Activated naive CD4-positive, alpha-beta T cell treated with anti-CD3 and anti-CD28 coated beads, Interleukin-2, amount 10 ng/mL, durations not matched to agents 7 days and 5 days (primary cell): ENCODE measurements at regions of chr7 and their contacts with region 1.

Region 1: DNA sequence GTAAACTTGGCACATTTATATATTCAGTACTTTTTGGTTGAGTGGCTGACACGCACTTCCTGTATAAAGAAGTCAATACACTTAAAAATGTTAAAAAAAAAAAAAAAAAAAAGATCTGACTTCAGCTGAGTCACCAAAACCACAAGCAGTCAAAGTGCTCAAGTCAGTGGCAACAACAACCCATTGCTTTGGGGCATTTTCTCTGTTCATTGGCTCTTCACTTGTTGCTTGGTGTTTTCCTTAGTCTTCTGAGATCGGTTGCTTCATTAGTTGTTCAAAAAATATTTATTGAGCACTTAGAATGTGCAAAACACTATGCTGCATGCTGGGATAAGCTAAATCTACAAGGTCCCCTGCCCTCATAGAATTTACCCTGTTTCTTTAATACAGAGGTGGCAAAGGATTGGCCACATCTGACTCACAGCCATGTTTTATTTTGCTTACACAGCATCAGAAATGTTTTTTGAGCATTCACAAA is 63.7 kb downstream of the ZNRF2 start:
- DNase-seq: peak; percentile 58
- H3K4me3 Mint-ChIP-seq: peak overlapping the region; percentile 10
- H3K27ac Mint-ChIP-seq: peak overlapping the region; percentile 94
- H3K4me1 Mint-ChIP-seq: peaks cover 55% of the 10 kb centered on the region
- H3K27me3 Mint-ChIP-seq: no peaks in the 10 kb centered on the region

Region 2: GRCh38 chr7:30263090-30263710 is 84.9 kb before region 1 on chr7:
- CTCF ChIA-PET with region 1: no interaction called
- DNase-seq: no peak
- H3K4me3 Mint-ChIP-seq: no peak overlapping the region
- H3K27ac Mint-ChIP-seq: no peak overlapping the region
- H3K4me1 Mint-ChIP-seq: no peaks in the 10 kb centered on the region
- H3K27me3 Mint-ChIP-seq: peaks cover 8% of the 10 kb centered on the region

Region 3: GRCh38 chr7:30276203-30276900 is 71.8 kb before region 1 on chr7:
- CTCF ChIA-PET with region 1: interaction called, 71 read pairs
- DNase-seq: peak; percentile 65
- H3K4me3 Mint-ChIP-seq: no peak overlapping the region
- H3K27ac Mint-ChIP-seq: no peak overlapping the region
- H3K4me1 Mint-ChIP-seq: peaks cover 2% of the 10 kb centered on the region
- H3K27me3 Mint-ChIP-seq: peaks cover 4% of the 10 kb centered on the region

Region 4: DNA sequence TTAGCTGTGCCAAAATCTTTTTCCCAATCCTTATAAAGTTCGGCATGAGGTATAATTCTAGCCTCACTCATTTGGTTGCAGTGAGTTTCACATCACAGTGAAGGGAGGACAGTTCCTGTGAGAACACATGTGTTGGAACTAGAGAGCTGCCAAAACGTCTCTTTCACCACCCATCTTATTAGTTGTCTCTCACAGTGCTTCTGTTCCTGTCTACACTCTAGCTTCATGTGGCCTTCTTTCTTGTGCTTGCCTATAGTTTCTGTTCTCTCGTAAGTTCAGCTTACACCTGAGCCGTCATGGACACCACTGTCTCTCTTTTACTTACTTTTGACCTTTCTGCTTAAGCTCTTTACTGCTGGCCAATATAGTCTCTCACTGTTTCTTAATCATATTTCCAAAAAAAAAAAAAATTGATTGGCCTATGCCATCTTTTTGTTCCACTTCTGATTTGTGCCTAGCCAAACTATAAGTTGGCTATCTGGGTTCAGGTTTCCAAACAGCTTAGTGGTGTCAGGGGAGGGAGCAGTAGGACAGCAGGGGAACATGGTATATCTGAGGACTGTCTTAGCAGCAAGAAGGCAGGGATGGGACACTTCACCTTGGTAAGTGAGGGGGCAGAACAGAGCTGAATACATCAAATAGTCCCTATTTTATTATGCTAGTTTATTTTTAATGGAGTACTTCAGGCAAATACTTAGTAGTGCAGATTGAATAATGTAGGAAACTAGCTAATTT is 25.7 kb before region 1 on chr7:
- CTCF ChIA-PET with region 1: interaction called, 13 read pairs
- DNase-seq: no peak
- H3K4me3 Mint-ChIP-seq: peak overlapping the region; percentile 61
- H3K27ac Mint-ChIP-seq: peak overlapping the region; percentile 98
- H3K4me1 Mint-ChIP-seq: peaks cover 52% of the 10 kb centered on the region
- H3K27me3 Mint-ChIP-seq: no peaks in the 10 kb centered on the region